ENCODE measurements at regions of chr9 and their contacts with region 1.

Region 1: GRCh38 chr9:123081824-123082223 is 48.4 kb downstream of the GPR21 start:
- DNase-seq: no peak
- ATAC-seq: peak; percentile 66
- H3K4me3 Mint-ChIP-seq: no peak overlapping the region
- H3K27ac Mint-ChIP-seq: no peak overlapping the region
- H3K4me1 Mint-ChIP-seq: peaks cover 19% of the 10 kb centered on the region
- H3K27me3 Mint-ChIP-seq: no peaks in the 10 kb centered on the region
- CTCF ChIP-seq: peak; percentile 44

Region 2: DNA sequence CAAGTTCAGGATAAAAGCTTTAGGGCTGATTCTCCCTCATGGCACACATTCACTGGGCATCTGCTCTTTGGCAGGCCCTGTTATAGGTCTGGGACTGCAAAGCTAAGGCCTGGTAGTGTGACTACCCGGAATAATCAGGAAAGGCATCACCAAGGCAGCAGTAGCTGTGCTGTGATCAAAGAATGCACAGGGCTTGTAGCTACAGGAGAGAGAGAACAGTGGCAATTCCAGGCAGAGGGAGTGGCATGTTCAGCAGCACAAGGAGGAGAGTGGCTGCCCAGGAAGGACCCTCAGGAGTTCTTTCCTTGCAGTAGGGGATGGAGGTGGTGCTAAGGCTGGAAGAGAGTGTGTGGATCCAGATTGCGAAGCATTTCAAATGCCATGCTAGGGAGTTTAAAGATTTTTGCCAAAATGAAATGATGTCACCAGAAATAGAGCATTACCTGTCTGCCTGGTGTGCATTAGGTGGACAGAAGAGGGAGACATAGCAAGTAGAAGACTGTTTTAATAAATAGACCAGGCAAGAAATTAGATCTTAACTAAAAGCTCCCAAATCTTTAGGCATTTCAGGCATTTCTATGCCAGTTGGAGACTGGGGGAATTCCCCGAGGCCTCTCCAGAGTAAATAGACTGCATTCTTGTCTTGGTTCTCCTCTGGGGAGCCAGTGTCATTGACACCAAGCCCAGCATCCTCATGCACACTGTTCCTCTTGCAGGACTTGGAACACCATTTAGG is 20.7 kb after region 1 on chr9:
- CTCF ChIA-PET with region 1: interaction called, 15 read pairs
- POLR2A ChIA-PET with region 1: no interaction called
- intact Hi-C with region 1: no loop called
- DNase-seq: no peak
- ATAC-seq: peak; percentile 34
- H3K4me3 Mint-ChIP-seq: no peak overlapping the region
- H3K27ac Mint-ChIP-seq: peak overlapping the region; percentile 71
- H3K4me1 Mint-ChIP-seq: peaks cover 12% of the 10 kb centered on the region
- H3K27me3 Mint-ChIP-seq: no peaks in the 10 kb centered on the region
- CTCF ChIP-seq: no peak

Region 3: GRCh38 chr9:123389070-123389469 is 307.2 kb after region 1 on chr9:
- CTCF ChIA-PET with region 1: interaction called, 4 read pairs
- POLR2A ChIA-PET with region 1: no interaction called
- intact Hi-C with region 1: loop called (anchors 1 kb)
- DNase-seq: no peak
- ATAC-seq: no peak
- H3K4me3 Mint-ChIP-seq: no peak overlapping the region
- H3K27ac Mint-ChIP-seq: no peak overlapping the region
- H3K4me1 Mint-ChIP-seq: no peaks in the 10 kb centered on the region
- H3K27me3 Mint-ChIP-seq: no peaks in the 10 kb centered on the region
- CTCF ChIP-seq: no peak